K562 (cell line): ENCODE measurements at regions of chr17 and their contacts with region 1.

Region 1: DNA sequence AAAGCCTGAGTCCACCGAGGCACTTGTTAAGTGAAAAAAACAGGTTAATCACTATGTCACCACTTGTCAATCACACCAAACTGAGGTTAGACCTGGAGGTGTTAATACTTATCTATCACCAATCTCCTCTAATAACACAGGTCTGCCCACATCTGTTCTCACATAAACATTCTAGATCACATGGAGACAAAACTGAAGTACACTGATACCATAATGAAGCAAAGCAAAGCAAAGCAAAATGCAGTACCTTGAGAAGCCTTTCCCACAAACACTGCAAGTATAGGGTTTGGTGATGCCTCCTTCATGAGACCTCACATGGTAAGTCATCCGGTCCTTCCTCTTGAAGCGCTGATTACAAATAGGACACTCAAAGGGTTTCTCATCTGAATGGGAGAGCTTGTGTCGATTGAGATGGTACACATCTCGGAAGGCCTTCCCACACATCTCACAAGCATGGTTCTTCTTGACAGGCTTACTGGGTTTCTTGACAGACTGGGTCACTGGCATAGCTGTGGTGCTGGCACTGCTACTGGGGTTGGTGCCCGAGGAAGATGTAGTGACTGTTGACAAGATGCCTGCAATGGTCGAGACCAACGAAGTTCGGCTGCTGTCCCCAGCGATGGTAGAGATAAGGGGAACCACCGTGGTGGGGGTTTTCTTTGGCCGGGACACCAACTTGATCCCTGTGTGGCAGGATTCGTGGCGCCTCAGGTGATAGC is 5.4 kb downstream of the VEZF1 start:
- DNase-seq: no peak
- ATAC-seq: no peak
- H3K4me3 ChIP-seq: no peak overlapping the region
- H3K27ac ChIP-seq: no peak overlapping the region
- H3K4me1 ChIP-seq: peaks cover 6 to 14% of the 10 kb centered on the region in 2 experiments; a peak in 3 of 5 replicates
- H3K27me3 ChIP-seq: no peaks in the 10 kb centered on the region
- CTCF ChIP-seq: no peak
- EP300 ChIP-seq: no peak
- POLR2A ChIP-seq: no peak
- RAD21 ChIP-seq: no peak

Region 2: DNA sequence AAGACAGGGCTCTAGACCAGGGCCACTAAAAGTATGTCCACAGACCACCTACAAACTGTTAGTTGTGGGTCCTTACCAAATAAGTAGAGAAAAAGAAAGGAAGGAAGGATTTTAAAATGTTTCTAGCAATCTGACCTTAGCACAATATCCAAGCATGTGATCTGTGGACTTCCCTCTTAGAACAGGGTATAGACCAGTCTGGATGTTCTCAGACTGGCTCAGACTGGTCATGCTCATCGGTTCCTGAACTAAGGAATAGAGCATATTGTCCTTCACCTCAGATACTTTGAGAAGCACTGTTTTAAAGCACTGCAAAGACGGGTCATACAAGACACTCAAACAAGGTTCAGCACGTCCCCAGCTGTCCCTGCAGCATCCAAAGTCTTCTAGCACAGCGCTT is 53.2 kb before region 1 on chr17:
- CTCF ChIA-PET with region 1: no interaction called
- POLR2A ChIA-PET with region 1: no interaction called
- in situ Hi-C with region 1: no loop called
- intact Hi-C with region 1: no loop called
- DNase-seq: no peak
- ATAC-seq: no peak
- H3K4me3 ChIP-seq: no peak overlapping the region
- H3K27ac ChIP-seq: no peak overlapping the region
- H3K4me1 ChIP-seq: no peaks in the 10 kb centered on the region
- H3K27me3 ChIP-seq: peaks cover 59 to 79% of the 10 kb centered on the region in 2 experiments
- CTCF ChIP-seq: no peak
- EP300 ChIP-seq: no peak
- POLR2A ChIP-seq: no peak
- RAD21 ChIP-seq: no peak

Region 3: GRCh38 chr17:57970706-57971105 is 11.9 kb before region 1 on chr17:
- CTCF ChIA-PET with region 1: no interaction called
- POLR2A ChIA-PET with region 1: interaction called, 11 read pairs
- in situ Hi-C with region 1: no loop called
- intact Hi-C with region 1: no loop called
- DNase-seq: no peak
- ATAC-seq: no peak
- H3K4me3 ChIP-seq: no peak overlapping the region
- H3K27ac ChIP-seq: no peak overlapping the region
- H3K4me1 ChIP-seq: no peaks in the 10 kb centered on the region; a peak in 1 of 5 replicates
- H3K27me3 ChIP-seq: peaks cover 6 to 20% of the 10 kb centered on the region in 2 experiments
- CTCF ChIP-seq: no peak
- EP300 ChIP-seq: no peak
- POLR2A ChIP-seq: no peak
- RAD21 ChIP-seq: no peak